Head of caudate nucleus (tissue), 42 donors: ENCODE measurements at regions of chr6 and their contacts with region 1.

Region 1: GRCh38 chr6:27388293-27389197 is at the start of gene ZNF391:
- DNase-seq: peak; percentile 70 to 89 (median 81)

Region 2: DNA sequence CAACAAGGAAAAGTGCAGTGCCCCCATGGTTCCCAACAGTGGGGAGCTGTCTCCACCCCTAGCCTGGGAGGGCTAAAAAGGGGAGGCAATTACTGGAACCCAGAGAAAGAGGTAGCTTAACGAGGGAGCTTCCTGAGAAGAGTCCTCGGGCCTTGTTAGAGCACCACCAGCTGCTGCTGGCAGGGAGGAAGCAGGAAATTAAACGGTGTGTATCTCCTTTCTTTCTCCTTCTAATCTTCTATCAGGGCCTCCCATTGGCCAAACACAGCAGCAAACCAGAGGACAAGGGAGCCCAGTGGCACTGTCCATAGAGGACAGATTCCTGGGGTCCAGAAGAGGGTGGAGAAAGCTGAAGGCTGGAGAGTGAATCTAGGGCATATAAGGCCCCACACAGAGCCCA is 1013.3 kb before region 1 on chr6:
- intact Hi-C with region 1: no loop called
- DNase-seq: no peak

Region 3: GRCh38 chr6:27479319-27480182 is 91.0 kb after region 1 on chr6:
- intact Hi-C with region 1: loop called (anchors 5 kb)
- DNase-seq: peak; percentile 44 to 92 (median 77)

Region 4: GRCh38 chr6:27642744-27643456 is 254.4 kb after region 1 on chr6:
- intact Hi-C with region 1: no loop called
- DNase-seq: peak in 1 of 42 donors; percentile 18